Caco-2 (cell line): ENCODE measurements at regions of chr10 and their contacts with region 1.

Region 1: GRCh38 chr10:25713894-25714240 is 220.2 kb upstream of the MYO3A start:
- DNase-seq: no peak
- H3K4me3 ChIP-seq: no peak overlapping the region
- H3K4me3 Mint-ChIP-seq: no peak overlapping the region
- H3K27ac Mint-ChIP-seq: no peak overlapping the region
- H3K4me1 ChIP-seq: peaks cover 8% of the 10 kb centered on the region; the same call in 1 of the 2 replicates
- H3K4me1 Mint-ChIP-seq: peaks cover 3% of the 10 kb centered on the region
- H3K27me3 ChIP-seq: no peaks in the 10 kb centered on the region
- H3K27me3 Mint-ChIP-seq: no peaks in the 10 kb centered on the region
- CTCF ChIP-seq: no peak

Region 2: DNA sequence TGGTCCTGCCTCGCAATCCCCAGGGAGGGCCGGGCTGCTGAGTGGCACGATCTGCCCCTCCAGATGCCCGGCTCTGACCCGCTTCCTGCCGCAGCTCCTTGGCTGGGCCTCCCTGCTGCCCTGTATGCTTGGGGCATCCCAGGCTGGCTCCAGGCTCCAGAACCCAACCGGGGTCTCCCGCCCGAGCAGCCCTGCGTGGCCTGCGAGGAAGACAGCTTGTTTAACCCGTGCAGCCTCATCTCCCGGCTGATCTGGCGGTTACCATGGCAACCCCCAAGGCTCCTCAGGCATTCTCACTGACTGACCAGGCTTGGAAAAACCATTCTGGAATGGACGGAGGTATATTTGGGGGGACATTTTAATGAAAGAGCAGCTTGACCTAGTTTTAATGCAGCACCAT is 12.2 kb before region 1 on chr10:
- CTCF ChIA-PET with region 1: interaction called, 6 read pairs
- POLR2A ChIA-PET with region 1: no interaction called
- intact Hi-C with region 1: loop called (anchors 1 kb)
- DNase-seq: no peak
- H3K4me3 ChIP-seq: no peak overlapping the region
- H3K4me3 Mint-ChIP-seq: no peak overlapping the region
- H3K27ac Mint-ChIP-seq: no peak overlapping the region
- H3K4me1 ChIP-seq: peaks cover 25% of the 10 kb centered on the region
- H3K4me1 Mint-ChIP-seq: peaks cover 8% of the 10 kb centered on the region
- H3K27me3 ChIP-seq: no peaks in the 10 kb centered on the region
- H3K27me3 Mint-ChIP-seq: peaks cover 3% of the 10 kb centered on the region
- CTCF ChIP-seq: no peak